Activated naive CD8-positive, alpha-beta T cell treated with anti-CD3 and anti-CD28 coated beads, Interleukin-2, amount 10 ng/mL, durations not matched to agents 7 days and 5 days (primary cell): ENCODE measurements at regions of chr10 and their contacts with region 1.

Region 1: GRCh38 chr10:102917962-102918816 is at the start of gene CNNM2:
- DNase-seq: peak; percentile 98
- ATAC-seq: peak; percentile 87
- H3K4me3 Mint-ChIP-seq: peak within 1 kb of the TSS; percentile 92
- H3K27ac Mint-ChIP-seq: peak within 1 kb of the TSS; percentile 93
- H3K4me1 Mint-ChIP-seq: peaks cover 53% of the 10 kb centered on the region
- H3K27me3 Mint-ChIP-seq: peaks cover 2% of the 10 kb centered on the region
- total RNA-seq, gene CNNM2: 10.9 to 12.3 TPM

Region 2: DNA sequence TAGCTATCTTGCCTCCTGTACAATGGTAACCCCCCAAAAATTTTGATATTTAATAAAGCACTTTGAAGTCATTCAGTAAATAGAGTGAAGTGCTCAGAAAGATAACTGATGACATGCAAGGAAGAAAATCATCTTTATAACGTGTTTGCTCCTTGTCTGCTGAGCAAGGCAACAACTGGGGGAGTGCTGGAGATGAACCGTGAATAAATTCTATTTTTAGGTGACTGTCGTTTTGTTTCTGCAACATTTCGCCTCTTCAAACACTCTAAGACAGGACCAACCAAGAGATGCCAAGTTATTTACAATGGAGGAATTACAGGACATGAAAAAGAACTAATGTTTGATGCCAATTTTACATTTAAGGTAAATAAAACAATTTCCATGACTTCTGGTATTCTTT is 39.6 kb before region 1 on chr10:
- POLR2A ChIA-PET with region 1: no interaction called
- DNase-seq: no peak
- ATAC-seq: no peak
- H3K4me3 Mint-ChIP-seq: no peak overlapping the region
- H3K27ac Mint-ChIP-seq: no peak overlapping the region
- H3K4me1 Mint-ChIP-seq: no peaks in the 10 kb centered on the region
- H3K27me3 Mint-ChIP-seq: peaks cover 3% of the 10 kb centered on the region

Region 3: DNA sequence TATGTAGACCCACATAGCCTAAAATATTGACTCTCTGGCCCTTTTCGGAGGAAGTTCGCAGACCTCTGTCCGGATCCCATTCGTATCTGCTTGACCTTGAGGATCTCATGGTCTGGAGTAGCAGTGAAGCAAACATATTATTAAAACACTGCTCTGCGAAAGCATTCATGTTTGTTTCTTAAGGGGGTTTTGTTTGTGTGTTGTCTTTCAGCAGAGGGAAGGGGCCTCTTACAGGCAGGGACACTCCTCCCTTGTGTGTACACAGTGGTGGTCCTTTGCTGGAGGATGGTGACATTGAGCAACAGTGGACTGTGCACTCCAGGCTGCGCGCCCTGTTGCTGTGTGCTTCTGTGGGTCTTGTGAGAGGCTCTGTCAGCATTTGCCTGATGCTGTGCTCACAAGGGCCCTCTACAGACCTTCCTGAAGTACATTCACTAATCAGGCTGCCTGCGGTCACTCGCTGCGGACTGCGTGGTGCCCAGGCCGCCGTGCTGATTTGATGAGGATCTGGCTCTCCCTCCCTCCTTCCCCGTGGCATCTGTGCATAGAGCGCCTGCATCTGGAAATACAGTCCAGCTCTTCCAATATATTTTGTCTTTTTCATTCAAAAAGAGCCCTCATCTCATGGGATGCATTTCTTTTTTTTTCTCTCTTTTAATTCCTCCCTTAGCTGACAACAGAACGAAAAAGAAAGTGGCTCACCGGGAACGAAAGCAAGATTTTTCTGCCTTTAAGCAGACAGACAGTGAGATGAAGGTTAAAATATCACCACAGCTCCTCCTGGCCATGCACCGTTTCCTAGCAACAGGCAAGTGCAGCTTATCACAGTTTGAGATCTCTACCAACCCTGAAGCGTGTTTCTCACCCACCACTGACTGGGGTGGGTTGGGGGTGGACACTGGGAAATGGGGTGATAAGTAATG is 135.7 kb after region 1 on chr10:
- POLR2A ChIA-PET with region 1: interaction called, 15 read pairs
- DNase-seq: peak; percentile 67
- ATAC-seq: peak; percentile 86
- H3K4me3 Mint-ChIP-seq: peak overlapping the region; percentile 88
- H3K27ac Mint-ChIP-seq: peak overlapping the region; percentile 93
- H3K4me1 Mint-ChIP-seq: peaks cover 24% of the 10 kb centered on the region
- H3K27me3 Mint-ChIP-seq: no peaks in the 10 kb centered on the region

Region 4: GRCh38 chr10:103069453-103070331 is 151.5 kb after region 1 on chr10:
- POLR2A ChIA-PET with region 1: interaction called, 21 read pairs
- DNase-seq: peak; percentile 70
- ATAC-seq: peak; percentile 68
- H3K4me3 Mint-ChIP-seq: peak overlapping the region; percentile 71
- H3K27ac Mint-ChIP-seq: peak overlapping the region; percentile 88
- H3K4me1 Mint-ChIP-seq: peaks cover 39% of the 10 kb centered on the region
- H3K27me3 Mint-ChIP-seq: no peaks in the 10 kb centered on the region

Region 5: DNA sequence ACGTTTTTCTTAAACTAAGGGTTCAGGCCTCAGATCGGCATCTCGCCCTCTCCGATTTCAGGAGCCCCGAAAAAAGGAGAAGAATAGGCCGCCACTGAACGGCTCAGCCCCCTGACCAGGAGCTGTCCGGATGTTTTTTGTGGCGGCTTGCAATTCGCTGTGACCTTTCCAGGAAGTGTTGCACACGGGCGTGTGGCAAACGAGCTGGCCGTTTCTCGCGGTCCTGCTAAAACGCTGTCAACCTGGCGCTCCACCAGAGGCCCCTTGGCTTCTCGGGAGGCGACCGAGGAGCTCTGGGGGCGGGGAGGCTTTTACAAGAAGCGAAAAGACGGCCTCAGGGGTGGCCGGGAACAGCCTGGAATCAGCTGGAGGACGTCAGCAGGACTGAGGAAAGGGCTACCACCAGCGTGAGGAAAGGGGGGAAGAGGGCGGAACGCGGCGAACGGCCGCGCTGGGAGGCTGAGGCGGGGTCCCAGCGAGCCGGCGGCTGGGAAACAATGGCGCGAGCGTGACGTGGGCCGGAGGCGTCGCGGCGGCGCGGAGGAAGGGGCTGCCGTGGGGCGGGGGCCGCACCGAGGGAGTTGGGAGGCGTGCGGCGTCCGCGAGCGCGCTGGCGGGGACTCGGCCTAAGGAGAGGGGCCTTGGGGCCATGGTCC is 274.4 kb after region 1 on chr10:
- POLR2A ChIA-PET with region 1: interaction called, 20 read pairs
- DNase-seq: peak; percentile 76
- ATAC-seq: peak; percentile 62
- H3K4me3 Mint-ChIP-seq: peak overlapping the region; percentile 92
- H3K27ac Mint-ChIP-seq: peak overlapping the region; percentile 99
- H3K4me1 Mint-ChIP-seq: peaks cover 33% of the 10 kb centered on the region
- H3K27me3 Mint-ChIP-seq: peaks cover 5% of the 10 kb centered on the region